ENCODE measurements at regions of chr19 and their contacts with region 1.

Region 1: DNA sequence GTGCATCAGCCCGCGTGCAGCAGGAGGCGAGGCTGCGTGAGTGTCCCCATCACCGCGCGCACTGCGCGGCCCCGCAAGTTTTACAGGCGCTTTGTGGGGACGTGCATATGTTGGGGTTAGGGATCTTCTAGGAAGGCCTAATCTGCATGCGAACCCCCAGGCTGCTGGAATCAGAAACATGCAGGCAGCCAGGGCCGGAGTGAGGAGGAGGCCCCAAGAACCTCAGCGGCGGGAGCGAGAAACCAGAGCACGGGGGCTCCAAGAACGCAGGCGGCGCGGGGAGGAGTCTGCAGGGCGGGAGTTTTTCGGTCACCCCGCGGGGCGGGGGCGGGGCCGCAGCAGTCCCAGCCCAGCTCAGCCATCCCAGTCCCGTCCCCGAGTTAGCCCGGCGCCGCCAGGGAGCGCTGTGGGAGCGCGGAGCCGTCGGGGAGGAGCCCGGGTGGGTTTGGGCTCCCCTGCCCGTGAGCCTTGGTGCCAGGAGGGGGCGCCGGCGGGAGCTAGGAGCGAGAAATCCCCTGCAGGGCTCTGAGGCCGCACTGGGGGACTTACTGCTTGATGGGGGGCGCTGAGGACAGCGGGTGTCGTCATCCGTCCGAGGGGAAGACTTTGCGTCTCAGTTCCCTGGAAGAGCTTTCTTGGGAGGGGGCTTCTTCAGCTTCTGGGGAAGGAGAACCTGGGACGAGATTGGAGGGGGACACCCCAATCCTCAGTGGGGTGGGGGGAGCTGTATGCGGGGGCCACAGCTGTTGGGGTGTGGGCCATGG is 933 bp upstream of the NRTN start:
- DNase-seq: peak; percentile 89
- H3K4me3 ChIP-seq: peak overlapping the region in 1 of 3 experiments; percentile 2
- H3K27ac ChIP-seq: no peak overlapping the region
- H3K4me1 ChIP-seq: peaks cover 5% of the 10 kb centered on the region
- H3K27me3 ChIP-seq: peaks cover 2 to 7% of the 10 kb centered on the region in 2 experiments
- CTCF ChIP-seq: peak; percentile 100
- POLR2A ChIP-seq: no peak

Region 2: GRCh38 chr19:5231857-5232503 is 572.0 kb before region 1 on chr19:
- CTCF ChIA-PET with region 1: no interaction called
- POLR2A ChIA-PET with region 1: no interaction called
- dilution Hi-C with region 1: no loop called
- intact Hi-C with region 1: no loop called
- DNase-seq: no peak
- H3K4me3 ChIP-seq: no peak overlapping the region
- H3K27ac ChIP-seq: no peak overlapping the region
- H3K4me1 ChIP-seq: no peaks in the 10 kb centered on the region
- H3K27me3 ChIP-seq: peaks cover 0 to 3% of the 10 kb centered on the region in 2 experiments
- CTCF ChIP-seq: no peak
- POLR2A ChIP-seq: no peak

Region 3: GRCh38 chr19:5515737-5516136 is 288.2 kb before region 1 on chr19:
- CTCF ChIA-PET with region 1: no interaction called
- POLR2A ChIA-PET with region 1: no interaction called
- dilution Hi-C with region 1: no loop called
- intact Hi-C with region 1: no loop called
- DNase-seq: no peak
- H3K4me3 ChIP-seq: no peak overlapping the region
- H3K27ac ChIP-seq: no peak overlapping the region
- H3K4me1 ChIP-seq: no peaks in the 10 kb centered on the region
- H3K27me3 ChIP-seq: no peaks in the 10 kb centered on the region
- CTCF ChIP-seq: no peak
- POLR2A ChIP-seq: no peak

Region 4: GRCh38 chr19:5615756-5616332 is 188.1 kb before region 1 on chr19:
- CTCF ChIA-PET with region 1: no interaction called
- POLR2A ChIA-PET with region 1: no interaction called
- dilution Hi-C with region 1: no loop called
- intact Hi-C with region 1: no loop called
- DNase-seq: no peak
- H3K4me3 ChIP-seq: no peak overlapping the region
- H3K27ac ChIP-seq: no peak overlapping the region
- H3K4me1 ChIP-seq: peaks cover 5% of the 10 kb centered on the region
- H3K27me3 ChIP-seq: no peaks in the 10 kb centered on the region
- CTCF ChIP-seq: no peak
- POLR2A ChIP-seq: no peak

Region 5: GRCh38 chr19:5631568-5632240 is 172.2 kb before region 1 on chr19:
- CTCF ChIA-PET with region 1: no interaction called
- POLR2A ChIA-PET with region 1: no interaction called
- dilution Hi-C with region 1: no loop called
- intact Hi-C with region 1: no loop called
- DNase-seq: no peak
- H3K4me3 ChIP-seq: no peak overlapping the region
- H3K27ac ChIP-seq: no peak overlapping the region
- H3K4me1 ChIP-seq: no peaks in the 10 kb centered on the region
- H3K27me3 ChIP-seq: no peaks in the 10 kb centered on the region
- CTCF ChIP-seq: no peak
- POLR2A ChIP-seq: no peak

Region 6: DNA sequence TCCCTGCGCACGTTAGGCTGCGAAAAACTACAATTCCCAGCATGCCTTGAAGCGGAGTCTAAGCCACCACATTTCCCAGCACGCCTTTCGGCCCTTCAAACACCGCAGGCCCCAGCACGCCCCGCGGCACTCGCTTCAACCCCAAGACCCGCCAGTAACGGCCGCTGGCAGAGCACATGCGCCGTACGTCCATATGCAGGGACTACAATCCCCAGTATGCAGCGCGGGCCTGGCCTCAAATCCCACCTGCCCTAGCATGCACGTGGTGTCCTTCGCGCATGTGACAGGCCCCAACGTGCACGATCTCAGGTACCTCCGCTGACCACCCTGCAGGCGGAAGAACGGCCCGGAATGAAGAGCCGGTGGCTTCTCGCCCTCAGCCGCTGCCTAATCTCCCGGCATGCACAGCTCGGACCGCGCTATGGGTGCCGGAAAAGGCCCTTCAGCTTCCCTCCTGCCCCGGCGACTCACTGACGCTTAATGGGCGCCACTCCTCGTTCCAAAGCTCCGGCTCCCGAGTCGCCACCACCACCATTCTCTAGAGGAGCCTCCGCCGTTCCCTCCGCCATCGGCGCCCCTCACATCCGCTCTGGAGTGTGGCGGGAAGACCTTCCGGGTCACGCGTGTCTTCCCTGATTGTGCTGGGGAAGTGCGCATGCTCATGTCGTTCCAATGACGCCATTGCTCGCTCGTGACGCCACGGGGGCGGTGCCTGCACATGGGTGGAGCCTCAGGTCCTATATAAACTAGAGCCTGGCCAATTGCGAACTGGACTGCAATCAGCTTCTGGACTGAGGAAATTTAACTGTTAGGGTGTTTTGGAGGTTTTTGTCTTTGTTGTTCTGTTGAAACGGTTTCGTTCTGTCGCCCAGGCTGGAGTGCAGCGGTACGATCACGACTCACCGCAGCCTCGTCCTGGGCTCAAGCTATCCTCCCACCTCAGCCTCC is 13.1 kb before region 1 on chr19 and contains the start of gene DUS3L:
- CTCF ChIA-PET with region 1: interaction called, 21 read pairs
- POLR2A ChIA-PET with region 1: no interaction called
- dilution Hi-C with region 1: no loop called
- intact Hi-C with region 1: no loop called
- DNase-seq: peak; percentile 99
- H3K4me3 ChIP-seq: peak within 1 kb of the TSS; percentile 17 to 75 (median 55)
- H3K27ac ChIP-seq: peak within 1 kb of the TSS; percentile 82
- H3K4me1 ChIP-seq: peaks cover 5% of the 10 kb centered on the region
- H3K27me3 ChIP-seq: no peaks in the 10 kb centered on the region
- CTCF ChIP-seq: no peak
- POLR2A ChIP-seq: peak; percentile 68
- total RNA-seq, gene DUS3L: 38.9 and 40.8 TPM in 2 replicates

Region 7: GRCh38 chr19:5857203-5858081 is 53.5 kb after region 1 on chr19:
- CTCF ChIA-PET with region 1: interaction called, 12 read pairs
- POLR2A ChIA-PET with region 1: no interaction called
- dilution Hi-C with region 1: no loop called
- intact Hi-C with region 1: no loop called
- DNase-seq: no peak
- H3K4me3 ChIP-seq: no peak overlapping the region
- H3K27ac ChIP-seq: no peak overlapping the region
- H3K4me1 ChIP-seq: no peaks in the 10 kb centered on the region
- H3K27me3 ChIP-seq: peaks cover 0 to 10% of the 10 kb centered on the region in 2 experiments
- CTCF ChIP-seq: no peak
- POLR2A ChIP-seq: no peak

Region 8: GRCh38 chr19:5897189-5897969 is 93.4 kb after region 1 on chr19:
- CTCF ChIA-PET with region 1: interaction called, 76 read pairs
- POLR2A ChIA-PET with region 1: no interaction called
- dilution Hi-C with region 1: no loop called
- intact Hi-C with region 1: loop called (anchors 1 kb)
- DNase-seq: no peak
- H3K4me3 ChIP-seq: no peak overlapping the region
- H3K27ac ChIP-seq: no peak overlapping the region
- H3K4me1 ChIP-seq: peaks cover 21% of the 10 kb centered on the region
- H3K27me3 ChIP-seq: no peaks in the 10 kb centered on the region
- CTCF ChIP-seq: peak in 1 of 2 donors; percentile 3
- POLR2A ChIP-seq: no peak

Region 9: GRCh38 chr19:5967994-5968430 is 164.1 kb after region 1 on chr19:
- CTCF ChIA-PET with region 1: interaction called, 11 read pairs
- POLR2A ChIA-PET with region 1: interaction called, 3 read pairs
- dilution Hi-C with region 1: no loop called
- intact Hi-C with region 1: no loop called
- DNase-seq: peak; percentile 84
- H3K4me3 ChIP-seq: no peak overlapping the region
- H3K27ac ChIP-seq: peak overlapping the region; percentile 61
- H3K4me1 ChIP-seq: peaks cover 16% of the 10 kb centered on the region
- H3K27me3 ChIP-seq: no peaks in the 10 kb centered on the region
- CTCF ChIP-seq: peak; percentile 85 to 86
- POLR2A ChIP-seq: no peak

Region 10: GRCh38 chr19:6021878-6022569 is 218.1 kb after region 1 on chr19:
- CTCF ChIA-PET with region 1: interaction called, 65 read pairs
- POLR2A ChIA-PET with region 1: no interaction called
- dilution Hi-C with region 1: no loop called
- intact Hi-C with region 1: loop called (anchors 1 kb)
- DNase-seq: peak; percentile 71
- H3K4me3 ChIP-seq: no peak overlapping the region
- H3K27ac ChIP-seq: no peak overlapping the region
- H3K4me1 ChIP-seq: peaks cover 12% of the 10 kb centered on the region
- H3K27me3 ChIP-seq: no peaks in the 10 kb centered on the region
- CTCF ChIP-seq: peak; percentile 80 to 85
- POLR2A ChIP-seq: no peak

Measured in endothelial cell of umbilical vein (primary cell).